ENCODE measurements at regions of chr5 and their contacts with region 1.

Region 1: GRCh38 chr5:14727428-14727865 is 62.9 kb downstream of the OTULIN start:
- DNase-seq: peak; percentile 62 to 94 (median 81)
- ATAC-seq: peak; percentile 87 to 93 (median 92)
- H3K4me3 ChIP-seq: no peak overlapping the region
- H3K27ac ChIP-seq: no peak overlapping the region
- H3K4me1 ChIP-seq: no peaks in the 10 kb centered on the region
- H3K27me3 ChIP-seq: no peaks in the 10 kb centered on the region
- CTCF ChIP-seq: peak; percentile 80 to 91 (median 88)

Region 2: GRCh38 chr5:15003511-15003920 is 276.1 kb after region 1 on chr5:
- intact Hi-C with region 1: loop called in 1 of 3 experiments (anchors 5 kb)
- DNase-seq: peak in 4 of 6 donors; percentile 32 to 57 (median 39)
- ATAC-seq: peak; percentile 79 to 97 (median 95)
- H3K4me3 ChIP-seq: no peak overlapping the region
- H3K27ac ChIP-seq: no peak overlapping the region
- H3K4me1 ChIP-seq: peaks cover 0 to 6% (median 3%) of the 10 kb centered on the region in 3 donors
- H3K27me3 ChIP-seq: no peaks in the 10 kb centered on the region
- CTCF ChIP-seq: peak; percentile 58 to 80 (median 74)

Region 3: DNA sequence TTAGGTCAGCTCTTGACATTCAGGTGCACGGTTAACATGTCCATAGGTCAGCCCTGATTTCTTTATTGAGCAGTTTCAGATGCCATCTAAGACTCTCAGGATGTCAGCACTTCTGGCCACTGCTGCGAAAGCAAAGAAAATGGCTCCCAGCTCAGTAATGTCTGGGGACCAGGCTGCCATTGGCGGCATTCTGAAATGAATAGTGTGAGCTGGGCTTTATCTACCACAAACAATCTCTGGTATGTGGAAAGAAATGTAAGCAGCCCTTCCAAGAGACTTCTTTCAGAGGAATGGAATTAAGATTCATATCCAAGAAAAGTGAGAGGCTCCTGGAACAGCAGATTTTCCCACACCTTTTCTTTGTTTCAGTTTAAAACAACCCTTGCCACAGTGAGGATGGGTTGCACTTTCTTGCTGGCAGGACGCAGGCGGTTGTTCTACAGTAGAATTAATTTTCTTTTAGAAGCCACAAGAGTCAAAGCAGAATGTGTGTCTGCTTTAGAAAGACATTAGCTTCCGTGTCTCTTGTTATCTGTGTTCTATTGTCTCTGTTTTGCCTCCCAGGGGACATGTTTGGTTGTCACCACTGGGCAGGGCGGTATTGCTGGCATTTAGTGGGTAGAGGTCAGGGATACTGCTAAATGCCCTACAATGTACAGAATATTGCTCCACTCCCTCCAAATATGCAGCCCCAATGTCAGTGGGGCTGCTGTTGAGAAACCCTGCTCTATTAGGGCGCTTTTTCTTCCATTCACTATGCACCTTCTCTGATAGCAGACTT is 294.0 kb after region 1 on chr5:
- intact Hi-C with region 1: loop called in 2 of 3 experiments (anchors 5 to 10 kb)
- DNase-seq: no peak
- ATAC-seq: peak in 2 of 4 donors; percentile 46 to 63
- H3K4me3 ChIP-seq: no peak overlapping the region
- H3K27ac ChIP-seq: peak overlapping the region in 1 of 4 donors; percentile 25
- H3K4me1 ChIP-seq: no peaks in the 10 kb centered on the region
- H3K27me3 ChIP-seq: no peaks in the 10 kb centered on the region
- CTCF ChIP-seq: no peak